H1 (cell line): ENCODE measurements at regions of chr1 and their contacts with region 1.

Region 1: GRCh38 chr1:194295685-194296084 is 1109.3 kb upstream of the B3GALT2 start:
- DNase-seq: no peak
- H3K4me3 ChIP-seq: no peak overlapping the region
- H3K27ac ChIP-seq: no peak overlapping the region
- H3K4me1 ChIP-seq: peaks cover 0 to 3% (median 0%) of the 10 kb centered on the region in 4 experiments; a peak in 1 of 7 replicates
- H3K27me3 ChIP-seq: no peaks in the 10 kb centered on the region
- CTCF ChIP-seq: peak in 2 of 3 experiments; percentile 79 to 83; a peak in 3 of 4 replicates
- EP300 ChIP-seq: no peak
- POLR2A ChIP-seq: no peak
- RAD21 ChIP-seq: peak; percentile 94

Region 2: GRCh38 chr1:194102606-194103005 is 193.1 kb before region 1 on chr1:
- CTCF ChIA-PET with region 1: interaction called, 16 read pairs
- POLR2A ChIA-PET with region 1: no interaction called
- DNase-seq: no peak
- H3K4me3 ChIP-seq: no peak overlapping the region
- H3K27ac ChIP-seq: no peak overlapping the region
- H3K4me1 ChIP-seq: no peaks in the 10 kb centered on the region
- H3K27me3 ChIP-seq: no peaks in the 10 kb centered on the region
- CTCF ChIP-seq: peak in 2 of 3 experiments; percentile 38 to 52; a peak in 3 of 4 replicates
- EP300 ChIP-seq: no peak
- POLR2A ChIP-seq: no peak
- RAD21 ChIP-seq: peak; percentile 41 to 66; a peak in 3 of 4 replicates

Region 3: DNA sequence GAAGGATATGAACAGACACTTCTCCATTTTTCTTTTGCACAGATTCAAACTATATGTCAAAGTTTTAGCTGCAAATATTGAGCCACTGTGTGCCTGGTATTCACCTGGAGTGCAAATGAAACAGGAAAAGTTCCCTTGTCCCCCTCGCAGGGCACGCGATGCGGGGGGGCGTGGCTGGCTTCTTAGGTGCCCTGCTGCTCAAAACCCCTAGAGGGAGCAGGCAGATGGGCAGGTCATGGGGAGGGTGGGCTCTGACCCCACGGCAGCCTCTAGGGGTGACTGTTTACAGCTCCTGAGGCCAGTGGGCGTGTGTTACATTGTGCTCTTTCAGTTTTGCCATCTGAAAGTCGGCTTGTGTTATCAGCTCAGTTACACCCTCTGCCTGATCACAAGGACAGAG is 178.1 kb before region 1 on chr1:
- CTCF ChIA-PET with region 1: interaction called, 12 read pairs
- POLR2A ChIA-PET with region 1: no interaction called
- DNase-seq: peak; percentile 60 to 79
- H3K4me3 ChIP-seq: no peak overlapping the region
- H3K27ac ChIP-seq: no peak overlapping the region
- H3K4me1 ChIP-seq: 0 out of 7 replicates have a peak, but pooled peaks cover 0 to 2% (median 0%) of the 10 kb centered on the region in 4 experiments
- H3K27me3 ChIP-seq: no peaks in the 10 kb centered on the region
- CTCF ChIP-seq: peak; percentile 73 to 86 (median 78)
- EP300 ChIP-seq: no peak
- POLR2A ChIP-seq: no peak
- RAD21 ChIP-seq: peak; percentile 48 to 63

Region 4: DNA sequence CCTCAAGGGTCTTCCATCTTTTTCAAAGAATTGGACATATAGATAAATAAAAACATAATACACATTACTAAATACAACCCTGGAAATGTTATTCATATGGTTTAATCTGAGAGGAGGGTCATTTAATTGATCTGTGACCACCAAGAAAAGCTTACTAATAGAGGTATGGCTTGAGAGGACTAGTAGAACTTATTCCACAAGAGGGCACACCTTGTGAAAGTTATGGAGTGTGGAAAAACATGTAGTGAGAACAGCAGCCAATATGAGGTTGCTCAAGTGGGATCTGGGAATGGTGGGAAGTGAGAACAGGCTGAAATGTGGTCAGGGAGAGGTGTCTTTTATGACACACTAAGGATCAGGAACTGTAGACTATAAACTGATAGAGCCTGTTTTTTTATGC is 135.7 kb before region 1 on chr1:
- CTCF ChIA-PET with region 1: interaction called, 13 read pairs
- POLR2A ChIA-PET with region 1: no interaction called
- DNase-seq: no peak
- H3K4me3 ChIP-seq: no peak overlapping the region
- H3K27ac ChIP-seq: no peak overlapping the region
- H3K4me1 ChIP-seq: no peaks in the 10 kb centered on the region
- H3K27me3 ChIP-seq: no peaks in the 10 kb centered on the region
- CTCF ChIP-seq: peak in 1 of 3 experiments; percentile 19; a peak in 2 of 4 replicates
- EP300 ChIP-seq: no peak
- POLR2A ChIP-seq: no peak
- RAD21 ChIP-seq: peak; percentile 24 to 25; a peak in 3 of 4 replicates

Region 5: DNA sequence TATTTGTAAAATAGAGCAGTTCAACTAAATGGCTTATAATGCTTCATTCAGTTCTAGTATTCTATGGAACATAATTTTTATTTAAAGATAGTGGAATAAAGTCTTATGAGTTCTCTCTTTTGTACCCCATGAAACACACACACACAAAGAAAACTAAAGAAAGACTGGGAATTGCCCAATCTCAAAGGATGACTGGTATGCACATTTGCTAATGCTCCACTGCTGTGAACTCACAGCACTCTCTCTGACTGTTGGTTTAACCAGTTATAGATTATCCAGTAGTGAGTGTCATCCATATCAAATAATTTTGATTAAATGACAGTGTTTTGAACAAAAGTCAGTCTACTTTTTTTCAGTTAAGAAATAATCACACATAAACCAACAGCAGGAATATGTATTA is 26.8 kb before region 1 on chr1:
- CTCF ChIA-PET with region 1: no interaction called
- POLR2A ChIA-PET with region 1: no interaction called
- DNase-seq: no peak
- H3K4me3 ChIP-seq: no peak overlapping the region
- H3K27ac ChIP-seq: no peak overlapping the region
- H3K4me1 ChIP-seq: no peaks in the 10 kb centered on the region
- H3K27me3 ChIP-seq: no peaks in the 10 kb centered on the region
- CTCF ChIP-seq: no peak
- EP300 ChIP-seq: no peak
- POLR2A ChIP-seq: no peak
- RAD21 ChIP-seq: no peak

Region 6: GRCh38 chr1:194548071-194548470 is 252.4 kb after region 1 on chr1:
- CTCF ChIA-PET with region 1: no interaction called
- POLR2A ChIA-PET with region 1: no interaction called
- DNase-seq: no peak
- H3K4me3 ChIP-seq: no peak overlapping the region
- H3K27ac ChIP-seq: no peak overlapping the region
- H3K4me1 ChIP-seq: no peaks in the 10 kb centered on the region
- H3K27me3 ChIP-seq: no peaks in the 10 kb centered on the region
- CTCF ChIP-seq: no peak
- EP300 ChIP-seq: no peak
- POLR2A ChIP-seq: no peak
- RAD21 ChIP-seq: no peak